Activated T-helper 1 cell treated with anti-CD3 and anti-CD28 coated beads, Interleukin-12 subunit alpha, Interleukin-12 subunit beta, Interleukin-2, Interleukin-4 antibody, amounts not matched to agents 30 ng/mL and 10 ng/mL and 1 ng/mL, durations not matched to agents 14 hours and 24 hours and 36 hours (primary cell): ENCODE measurements at regions of chr12 and their contacts with region 1.

Region 1: DNA sequence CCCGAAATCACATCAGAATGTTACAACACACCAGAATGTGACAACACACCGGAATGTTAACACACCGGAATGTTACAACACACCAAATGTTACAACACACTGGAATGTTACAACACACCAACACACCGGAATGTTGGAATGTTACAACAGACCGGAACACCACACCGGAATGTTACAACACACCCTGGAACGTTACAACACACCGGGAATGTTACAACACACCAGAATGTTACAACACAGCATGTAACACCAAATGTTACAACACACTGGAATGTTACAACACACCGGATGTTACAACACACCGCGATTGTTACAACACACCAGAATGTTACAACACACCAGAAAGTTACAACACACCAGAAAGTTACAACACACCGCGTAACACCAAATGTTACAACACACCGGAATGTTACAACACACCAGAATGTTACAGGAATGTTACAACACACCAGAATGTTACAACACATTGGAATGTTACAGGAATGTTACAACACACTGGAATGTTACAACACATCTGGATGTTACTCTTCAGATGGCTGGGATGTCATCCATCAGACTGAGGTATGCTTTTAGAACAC is 21.1 kb downstream of the CHFR start:
- DNase-seq: no peak
- H3K4me3 Mint-ChIP-seq: no peak overlapping the region
- H3K27ac Mint-ChIP-seq: peak overlapping the region; percentile 48
- H3K4me1 Mint-ChIP-seq: peaks cover 11% of the 10 kb centered on the region
- H3K27me3 Mint-ChIP-seq: no peaks in the 10 kb centered on the region

Region 2: DNA sequence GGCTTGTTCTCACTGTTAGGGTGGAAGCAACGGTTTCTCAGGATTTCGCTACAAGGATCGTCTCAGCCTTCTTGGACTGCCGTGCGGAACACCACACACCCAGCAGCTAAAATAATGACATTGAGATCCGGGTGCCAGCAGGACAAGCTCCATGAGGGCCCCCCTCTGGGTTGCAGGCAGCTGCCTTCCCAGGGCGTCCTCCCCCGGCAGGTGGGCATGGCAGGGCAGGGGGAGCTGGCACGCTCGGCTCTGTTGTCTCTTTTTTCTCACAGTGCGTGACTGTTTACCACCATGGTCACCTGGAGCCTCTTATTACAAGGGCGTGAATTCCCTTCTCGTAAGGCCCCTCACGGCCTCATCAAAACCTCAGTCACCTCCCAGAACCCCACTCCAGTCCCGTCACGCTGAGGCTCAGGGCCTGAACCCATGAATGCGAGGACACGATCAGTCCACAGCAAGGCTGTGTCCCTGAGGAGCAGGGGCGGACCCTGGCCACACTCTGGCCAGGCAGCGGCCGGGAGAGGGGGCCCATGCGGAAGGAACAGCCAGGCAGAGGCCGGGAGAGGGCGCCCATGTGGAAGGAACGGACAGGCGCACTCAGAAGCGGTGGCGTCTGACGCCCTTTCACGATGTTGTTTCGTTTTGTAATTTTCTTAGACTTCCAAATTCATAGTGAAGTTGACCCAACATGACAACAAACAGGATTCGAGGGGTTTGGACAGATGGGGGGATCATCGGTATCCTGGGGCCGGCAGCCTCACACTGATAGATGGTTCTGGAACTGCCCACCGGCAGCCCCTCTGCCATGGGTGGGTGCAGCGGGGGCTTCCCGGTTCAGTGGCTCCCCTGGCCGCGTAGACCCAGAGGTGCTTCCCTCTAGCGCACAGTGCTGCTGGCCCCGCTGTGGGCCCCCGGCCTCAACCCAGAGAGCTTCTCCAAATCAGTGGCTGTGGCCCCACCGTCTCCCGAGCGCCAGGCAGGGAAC is 266.0 kb before region 1 on chr12:
- intact Hi-C with region 1: no loop called
- DNase-seq: no peak
- H3K4me3 Mint-ChIP-seq: peak overlapping the region; percentile 67
- H3K27ac Mint-ChIP-seq: no peak overlapping the region
- H3K4me1 Mint-ChIP-seq: peaks cover 11% of the 10 kb centered on the region
- H3K27me3 Mint-ChIP-seq: peaks cover 52% of the 10 kb centered on the region

Region 3: DNA sequence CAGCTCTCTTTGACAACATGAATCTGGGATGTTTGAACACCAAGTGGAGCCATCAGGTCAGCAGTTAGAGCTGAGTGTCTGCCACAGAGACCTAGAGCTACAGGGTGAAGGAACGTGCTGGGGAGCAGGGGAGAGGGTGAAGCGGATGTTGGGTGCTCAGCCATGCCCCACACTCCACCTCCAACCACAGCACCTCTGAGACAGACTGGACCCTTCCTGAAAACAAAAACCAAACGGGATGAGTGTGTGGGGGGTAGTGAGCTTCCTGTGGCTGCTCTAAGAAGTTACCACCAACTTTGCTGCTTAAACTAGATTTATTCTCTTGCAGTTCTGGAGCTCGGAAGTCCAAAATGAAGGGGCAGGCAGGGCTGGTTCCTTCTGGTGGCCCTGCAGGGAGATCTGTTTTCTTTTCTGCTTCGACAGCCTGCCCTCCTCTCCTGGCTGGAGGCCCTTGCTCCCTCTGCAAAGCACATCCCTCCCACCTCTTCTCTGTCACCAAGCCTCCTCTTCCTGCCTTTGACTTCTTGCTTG is 32.1 kb before region 1 on chr12:
- intact Hi-C with region 1: loop called (anchors 5 kb)
- DNase-seq: no peak
- H3K4me3 Mint-ChIP-seq: peak overlapping the region; percentile 43
- H3K27ac Mint-ChIP-seq: peak overlapping the region; percentile 95
- H3K4me1 Mint-ChIP-seq: peaks cover 39% of the 10 kb centered on the region
- H3K27me3 Mint-ChIP-seq: no peaks in the 10 kb centered on the region

Region 4: GRCh38 chr12:133073836-133074235 is 207.5 kb after region 1 on chr12:
- intact Hi-C with region 1: no loop called
- DNase-seq: no peak
- H3K4me3 Mint-ChIP-seq: no peak overlapping the region
- H3K27ac Mint-ChIP-seq: no peak overlapping the region
- H3K4me1 Mint-ChIP-seq: no peaks in the 10 kb centered on the region
- H3K27me3 Mint-ChIP-seq: no peaks in the 10 kb centered on the region